ENCODE measurements at regions of chr11 and their contacts with region 1.

Region 1: GRCh38 chr11:75280227-75280701 is 39.7 kb downstream of the TPBGL start:
- DNase-seq: peak; percentile 95
- H3K4me3 ChIP-seq: peak overlapping the region in 1 of 2 experiments; percentile 18; a peak in 1 of 4 replicates
- H3K27ac ChIP-seq: peak overlapping the region in 1 of 2 experiments; percentile 62; a peak in 2 of 4 replicates
- H3K4me1 ChIP-seq: peaks cover 0 to 19% of the 10 kb centered on the region in 2 experiments; a peak in 1 of 4 replicates
- H3K27me3 ChIP-seq: no peaks in the 10 kb centered on the region
- CTCF ChIP-seq: peak; percentile 89
- EP300 ChIP-seq: no peak
- RAD21 ChIP-seq: peak; percentile 99

Region 2: GRCh38 chr11:74956397-74957015 is 323.8 kb before region 1 on chr11:
- CTCF ChIA-PET with region 1: no interaction called
- POLR2A ChIA-PET with region 1: no interaction called
- DNase-seq: no peak
- H3K4me3 ChIP-seq: no peak overlapping the region
- H3K27ac ChIP-seq: no peak overlapping the region
- H3K4me1 ChIP-seq: peaks cover 0 to 6% of the 10 kb centered on the region in 2 experiments; a peak in 2 of 4 replicates
- H3K27me3 ChIP-seq: no peaks in the 10 kb centered on the region
- CTCF ChIP-seq: no peak
- EP300 ChIP-seq: no peak
- RAD21 ChIP-seq: no peak

Region 3: DNA sequence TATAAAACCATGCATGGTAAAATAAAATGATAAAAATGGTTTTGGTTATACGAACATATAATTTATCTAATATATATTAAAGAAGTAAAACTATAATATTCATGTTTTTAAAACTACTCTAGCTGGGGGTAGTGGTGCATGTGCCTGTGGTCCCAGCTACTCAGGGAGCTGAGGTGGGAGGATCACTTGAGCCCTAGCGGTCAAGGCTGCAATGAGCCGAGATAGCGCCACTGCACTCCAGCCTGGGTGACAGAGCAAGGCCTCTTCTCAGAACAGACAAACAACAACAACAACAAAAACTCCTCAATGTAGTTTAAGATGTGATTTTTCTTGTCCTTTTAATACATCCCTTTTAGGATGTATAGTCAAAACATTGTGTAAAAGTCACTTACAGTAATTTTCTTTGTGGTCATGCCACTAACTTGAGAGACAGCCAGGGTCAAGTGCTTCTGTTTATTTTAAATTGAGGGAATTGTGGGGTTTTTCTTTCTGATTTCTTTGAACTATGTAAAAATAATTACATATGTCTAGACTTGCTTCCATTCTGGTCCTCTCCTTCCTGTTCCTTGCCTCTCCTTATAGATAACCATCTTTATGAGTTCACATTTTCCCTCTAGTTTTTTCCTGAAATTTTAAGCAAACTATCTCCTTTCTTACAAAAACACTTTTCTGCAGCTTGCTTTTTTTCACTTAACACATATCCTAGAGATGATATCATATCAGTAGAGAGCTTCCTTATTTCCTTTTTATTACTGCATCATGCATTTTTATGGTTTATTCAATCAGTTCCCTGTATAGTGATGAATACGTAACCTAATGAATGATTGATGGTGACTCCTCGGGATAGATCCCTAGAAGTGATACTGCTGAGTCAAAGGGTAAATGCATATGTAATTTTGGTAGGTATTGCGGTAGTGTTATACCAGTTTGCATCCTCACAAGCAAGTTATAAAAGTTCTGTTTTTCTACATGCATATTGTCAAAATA is 192.7 kb before region 1 on chr11:
- CTCF ChIA-PET with region 1: no interaction called
- POLR2A ChIA-PET with region 1: no interaction called
- DNase-seq: no peak
- H3K4me3 ChIP-seq: no peak overlapping the region
- H3K27ac ChIP-seq: no peak overlapping the region
- H3K4me1 ChIP-seq: no peaks in the 10 kb centered on the region
- H3K27me3 ChIP-seq: no peaks in the 10 kb centered on the region
- CTCF ChIP-seq: no peak
- EP300 ChIP-seq: no peak
- RAD21 ChIP-seq: no peak

Region 4: GRCh38 chr11:75230621-75231020 is 49.6 kb before region 1 on chr11:
- CTCF ChIA-PET with region 1: no interaction called
- POLR2A ChIA-PET with region 1: no interaction called
- DNase-seq: no peak
- H3K4me3 ChIP-seq: no peak overlapping the region
- H3K27ac ChIP-seq: no peak overlapping the region
- H3K4me1 ChIP-seq: peaks cover 0 to 2% of the 10 kb centered on the region in 2 experiments; a peak in 1 of 4 replicates
- H3K27me3 ChIP-seq: no peaks in the 10 kb centered on the region
- CTCF ChIP-seq: no peak
- EP300 ChIP-seq: no peak
- RAD21 ChIP-seq: no peak

Region 5: GRCh38 chr11:75263944-75264349 is 16.3 kb before region 1 on chr11:
- CTCF ChIA-PET with region 1: interaction called, 27 read pairs
- POLR2A ChIA-PET with region 1: no interaction called
- DNase-seq: no peak
- H3K4me3 ChIP-seq: no peak overlapping the region
- H3K27ac ChIP-seq: no peak overlapping the region
- H3K4me1 ChIP-seq: peaks cover 0 to 12% of the 10 kb centered on the region in 2 experiments; a peak in 1 of 4 replicates
- H3K27me3 ChIP-seq: no peaks in the 10 kb centered on the region
- CTCF ChIP-seq: no peak
- EP300 ChIP-seq: no peak
- RAD21 ChIP-seq: no peak

Region 6: GRCh38 chr11:75301601-75302345 is 21.5 kb after region 1 on chr11:
- CTCF ChIA-PET with region 1: interaction called, 30 read pairs
- POLR2A ChIA-PET with region 1: no interaction called
- DNase-seq: no peak
- H3K4me3 ChIP-seq: no peak overlapping the region
- H3K27ac ChIP-seq: peak overlapping the region in 1 of 2 experiments; percentile 75; a peak in 2 of 4 replicates
- H3K4me1 ChIP-seq: peaks cover 0 to 31% of the 10 kb centered on the region in 2 experiments; a peak in 2 of 4 replicates
- H3K27me3 ChIP-seq: no peaks in the 10 kb centered on the region
- CTCF ChIP-seq: no peak
- EP300 ChIP-seq: no peak
- RAD21 ChIP-seq: no peak

Region 7: GRCh38 chr11:75328426-75329277 is 48.4 kb after region 1 on chr11:
- CTCF ChIA-PET with region 1: interaction called, 31 read pairs
- POLR2A ChIA-PET with region 1: no interaction called
- DNase-seq: peak; percentile 87
- H3K4me3 ChIP-seq: no peak overlapping the region
- H3K27ac ChIP-seq: peak overlapping the region in 1 of 2 experiments; percentile 58; a peak in 2 of 4 replicates
- H3K4me1 ChIP-seq: peaks cover 11 to 23% of the 10 kb centered on the region in 2 experiments; a peak in 3 of 4 replicates
- H3K27me3 ChIP-seq: no peaks in the 10 kb centered on the region
- CTCF ChIP-seq: peak; percentile 73
- EP300 ChIP-seq: peak in 1 of 2 experiments; percentile 27; a peak in 2 of 4 replicates
- RAD21 ChIP-seq: peak; percentile 81

Region 8: GRCh38 chr11:75342903-75343870 is 62.9 kb after region 1 on chr11:
- CTCF ChIA-PET with region 1: interaction called, 46 read pairs
- POLR2A ChIA-PET with region 1: no interaction called
- DNase-seq: no peak
- H3K4me3 ChIP-seq: no peak overlapping the region
- H3K27ac ChIP-seq: no peak overlapping the region; a peak in 1 of 4 replicates
- H3K4me1 ChIP-seq: peaks cover 52 to 75% of the 10 kb centered on the region in 2 experiments
- H3K27me3 ChIP-seq: no peaks in the 10 kb centered on the region
- CTCF ChIP-seq: no peak
- EP300 ChIP-seq: peak in 1 of 2 experiments; percentile 19; a peak in 1 of 4 replicates
- RAD21 ChIP-seq: no peak

Region 9: DNA sequence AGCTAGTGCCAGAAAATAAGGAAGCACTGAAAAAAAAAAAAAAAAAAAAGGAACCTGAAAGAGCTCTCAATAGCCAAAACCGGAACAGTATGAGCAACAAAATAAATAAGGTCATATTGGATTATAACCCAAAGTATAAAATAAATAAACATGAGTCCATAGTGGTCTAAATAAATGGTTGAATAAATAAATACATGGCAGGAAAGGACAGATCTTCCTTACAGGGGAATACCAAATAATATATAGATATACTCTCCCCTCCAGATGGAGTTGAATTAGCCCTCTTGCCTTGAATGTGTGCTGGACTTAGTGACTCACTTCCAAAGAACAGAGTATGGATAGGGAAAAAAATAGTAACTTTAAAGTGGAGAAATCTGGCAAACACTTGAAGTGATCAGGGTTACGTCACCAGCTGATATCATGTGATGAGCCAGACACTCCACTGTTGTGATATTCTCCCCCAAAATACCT is 85.5 kb after region 1 on chr11:
- CTCF ChIA-PET with region 1: interaction called, 701 read pairs
- POLR2A ChIA-PET with region 1: no interaction called
- DNase-seq: no peak
- H3K4me3 ChIP-seq: no peak overlapping the region
- H3K27ac ChIP-seq: no peak overlapping the region
- H3K4me1 ChIP-seq: no peaks in the 10 kb centered on the region
- H3K27me3 ChIP-seq: no peaks in the 10 kb centered on the region
- CTCF ChIP-seq: no peak
- EP300 ChIP-seq: no peak
- RAD21 ChIP-seq: no peak

Region 10: GRCh38 chr11:76131671-76132631 is 851.7 kb after region 1 on chr11:
- CTCF ChIA-PET with region 1: no interaction called
- POLR2A ChIA-PET with region 1: no interaction called
- DNase-seq: no peak
- H3K4me3 ChIP-seq: no peak overlapping the region
- H3K27ac ChIP-seq: peak overlapping the region in 1 of 2 experiments; percentile 8; a peak in 2 of 4 replicates
- H3K4me1 ChIP-seq: peaks cover 0 to 21% of the 10 kb centered on the region in 2 experiments; a peak in 2 of 4 replicates
- H3K27me3 ChIP-seq: no peaks in the 10 kb centered on the region
- CTCF ChIP-seq: no peak
- EP300 ChIP-seq: no peak
- RAD21 ChIP-seq: no peak

Measured in SK-N-SH (cell line).